SK-N-SH (cell line): ENCODE measurements at regions of chr10 and their contacts with region 1.

Region 1: DNA sequence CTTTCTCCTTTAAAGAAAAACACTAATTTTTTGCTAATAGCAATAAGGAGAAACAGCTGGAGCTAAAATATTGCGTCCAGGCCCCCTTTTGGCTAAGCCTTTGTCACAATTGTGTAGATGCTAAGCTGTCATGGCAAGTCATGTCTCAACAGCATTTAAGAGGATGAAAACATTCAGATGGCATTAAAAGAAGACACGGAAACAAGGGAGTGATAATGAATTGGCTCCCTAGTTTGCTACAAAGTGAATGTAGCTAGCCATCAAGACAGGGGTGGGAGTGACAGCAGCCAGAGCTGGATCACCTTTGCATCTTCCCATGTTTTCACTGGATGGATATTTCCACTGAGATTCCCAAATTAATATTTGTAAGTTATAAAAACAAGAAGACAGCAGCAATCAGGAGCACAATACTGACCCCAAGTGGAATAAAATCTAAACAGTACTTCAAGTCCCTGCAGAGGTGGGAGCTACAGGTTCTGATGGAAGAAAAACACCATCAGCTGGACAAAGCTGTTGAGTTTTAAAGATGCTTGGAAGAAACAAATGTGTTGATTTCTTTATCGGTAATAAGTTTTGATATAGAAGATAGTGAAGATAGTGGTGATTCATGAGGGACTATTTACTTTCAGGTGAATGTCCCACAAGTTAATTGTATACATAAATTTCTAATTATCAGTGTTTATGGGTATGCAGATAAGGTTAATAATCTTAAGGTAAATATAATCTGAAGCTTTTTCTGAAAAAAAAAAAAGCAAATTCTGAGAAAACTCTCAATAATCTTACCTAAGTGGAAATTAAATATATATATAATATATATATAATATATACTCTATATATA is 129.4 kb downstream of the SLC16A9 start:
- DNase-seq: peak; percentile 45
- H3K4me3 ChIP-seq: no peak overlapping the region
- H3K27ac ChIP-seq: no peak overlapping the region
- H3K4me1 ChIP-seq: peaks cover 13 to 15% of the 10 kb centered on the region in 2 experiments; a peak in 3 of 4 replicates
- H3K27me3 ChIP-seq: no peaks in the 10 kb centered on the region
- CTCF ChIP-seq: peak; percentile 83
- EP300 ChIP-seq: no peak
- RAD21 ChIP-seq: peak; percentile 91

Region 2: DNA sequence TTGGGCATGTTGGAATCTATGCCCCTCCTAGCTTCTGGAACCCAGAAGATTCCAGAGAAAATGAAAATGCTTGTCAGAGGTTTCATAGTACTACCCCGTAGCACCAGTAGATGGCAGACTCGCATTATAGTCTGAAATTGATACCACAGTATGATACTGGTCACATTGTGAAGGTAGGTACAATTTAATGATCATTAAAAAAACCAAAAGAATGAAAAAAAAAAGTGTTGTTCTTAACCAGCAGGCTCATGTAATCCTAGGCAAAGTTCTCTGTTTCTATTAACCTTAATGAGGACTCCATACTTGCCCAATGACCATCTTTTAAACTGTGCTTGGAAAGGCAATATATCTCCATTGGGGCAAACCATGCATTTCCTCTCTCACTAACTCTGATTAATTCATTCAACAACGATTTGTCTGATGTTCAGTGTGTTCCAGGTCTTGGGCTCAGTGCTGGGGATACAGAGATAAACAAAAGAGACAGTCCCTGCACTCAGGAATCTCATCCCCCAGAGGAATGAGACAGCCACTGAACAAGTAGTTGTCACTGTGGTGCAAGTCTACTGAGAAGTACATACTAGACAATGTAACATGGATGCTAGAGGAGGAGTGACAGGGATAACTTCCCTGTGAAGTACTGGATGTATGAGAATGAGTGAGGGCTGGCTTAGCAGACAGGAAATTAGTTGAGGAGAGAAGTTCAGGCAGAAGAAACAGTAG is 627.3 kb before region 1 on chr10:
- CTCF ChIA-PET with region 1: interaction called, 43 read pairs
- POLR2A ChIA-PET with region 1: no interaction called
- DNase-seq: peak; percentile 36
- H3K4me3 ChIP-seq: no peak overlapping the region; a peak in 1 of 4 replicates
- H3K27ac ChIP-seq: no peak overlapping the region
- H3K4me1 ChIP-seq: peaks cover 6 to 7% of the 10 kb centered on the region in 2 experiments
- H3K27me3 ChIP-seq: no peaks in the 10 kb centered on the region
- CTCF ChIP-seq: peak; percentile 87
- EP300 ChIP-seq: 0 out of 4 replicates have a peak, but pooled peaks of 1 of the 2 experiments have one; percentile 6
- RAD21 ChIP-seq: peak; percentile 95

Region 3: GRCh38 chr10:59240582-59241183 is 339.6 kb before region 1 on chr10:
- CTCF ChIA-PET with region 1: interaction called, 22 read pairs
- POLR2A ChIA-PET with region 1: no interaction called
- DNase-seq: peak; percentile 23
- H3K4me3 ChIP-seq: no peak overlapping the region
- H3K27ac ChIP-seq: no peak overlapping the region; a peak in 1 of 4 replicates
- H3K4me1 ChIP-seq: no peaks in the 10 kb centered on the region; a peak in 1 of 4 replicates
- H3K27me3 ChIP-seq: no peaks in the 10 kb centered on the region
- CTCF ChIP-seq: peak; percentile 77
- EP300 ChIP-seq: no peak
- RAD21 ChIP-seq: peak; percentile 83

Region 4: GRCh38 chr10:59388671-59388976 is 191.6 kb before region 1 on chr10:
- CTCF ChIA-PET with region 1: interaction called, 10 read pairs
- POLR2A ChIA-PET with region 1: no interaction called
- DNase-seq: no peak
- H3K4me3 ChIP-seq: no peak overlapping the region
- H3K27ac ChIP-seq: peak overlapping the region; percentile 35 to 97; a peak in 3 of 4 replicates
- H3K4me1 ChIP-seq: peaks cover 0 to 29% of the 10 kb centered on the region in 2 experiments
- H3K27me3 ChIP-seq: no peaks in the 10 kb centered on the region
- CTCF ChIP-seq: no peak; the same call in 1 of the 2 replicates
- EP300 ChIP-seq: no peak
- RAD21 ChIP-seq: no peak

Region 5: GRCh38 chr10:59606551-59606961 is 26.3 kb after region 1 on chr10:
- CTCF ChIA-PET with region 1: interaction called, 10 read pairs
- POLR2A ChIA-PET with region 1: no interaction called
- DNase-seq: peak; percentile 55
- H3K4me3 ChIP-seq: no peak overlapping the region
- H3K27ac ChIP-seq: peak overlapping the region; percentile 11 to 72; a peak in 3 of 4 replicates
- H3K4me1 ChIP-seq: peaks cover 13 to 14% of the 10 kb centered on the region in 2 experiments
- H3K27me3 ChIP-seq: no peaks in the 10 kb centered on the region
- CTCF ChIP-seq: no peak
- EP300 ChIP-seq: peak; percentile 56 to 93; a peak in 3 of 4 replicates
- RAD21 ChIP-seq: peak; percentile 29; the same call in 1 of the 2 replicates